Activated naive CD4-positive, alpha-beta T cell treated with anti-CD3 and anti-CD28 coated beads for 36 hours (primary cell): ENCODE measurements at regions of chr3 and their contacts with region 1.

Region 1: GRCh38 chr3:184417619-184418327 is 37.9 kb downstream of the CHRD start:
- DNase-seq: peak; percentile 78
- H3K4me3 Mint-ChIP-seq: no peak overlapping the region
- H3K27ac Mint-ChIP-seq: no peak overlapping the region
- H3K4me1 Mint-ChIP-seq: no peaks in the 10 kb centered on the region
- H3K27me3 Mint-ChIP-seq: no peaks in the 10 kb centered on the region

Region 2: DNA sequence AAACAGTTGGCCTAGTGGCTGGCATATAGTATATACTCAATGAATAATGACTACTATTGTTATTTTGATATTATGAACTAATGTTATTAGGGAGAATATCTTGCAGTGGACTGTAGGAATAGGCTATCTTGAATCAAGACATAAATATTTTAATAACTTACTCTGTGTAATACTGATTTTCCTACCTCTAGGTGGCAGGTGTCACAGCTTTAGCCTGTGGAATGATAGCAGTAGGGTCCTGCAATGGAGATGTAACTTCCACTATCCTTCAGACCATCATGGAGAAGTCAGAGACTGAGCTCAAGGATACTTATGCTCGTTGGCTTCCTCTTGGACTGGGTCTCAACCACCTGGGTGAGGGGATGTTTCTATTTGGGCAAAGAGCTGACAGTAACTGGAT is 112.2 kb before region 1 on chr3:
- CTCF ChIA-PET with region 1: no interaction called
- intact Hi-C with region 1: no loop called
- DNase-seq: no peak
- H3K4me3 Mint-ChIP-seq: no peak overlapping the region
- H3K27ac Mint-ChIP-seq: no peak overlapping the region
- H3K4me1 Mint-ChIP-seq: peaks cover 11% of the 10 kb centered on the region
- H3K27me3 Mint-ChIP-seq: no peaks in the 10 kb centered on the region

Region 3: GRCh38 chr3:184395320-184395660 is 22.5 kb before region 1 on chr3:
- CTCF ChIA-PET with region 1: no interaction called
- intact Hi-C with region 1: no loop called
- DNase-seq: no peak
- H3K4me3 Mint-ChIP-seq: no peak overlapping the region
- H3K27ac Mint-ChIP-seq: no peak overlapping the region
- H3K4me1 Mint-ChIP-seq: no peaks in the 10 kb centered on the region
- H3K27me3 Mint-ChIP-seq: peaks cover 7% of the 10 kb centered on the region

Region 4: GRCh38 chr3:184469423-184469822 is 51.6 kb after region 1 on chr3:
- CTCF ChIA-PET with region 1: interaction called, 3 read pairs
- intact Hi-C with region 1: loop called (anchors 1 kb)
- DNase-seq: peak; percentile 68
- H3K4me3 Mint-ChIP-seq: no peak overlapping the region
- H3K27ac Mint-ChIP-seq: no peak overlapping the region
- H3K4me1 Mint-ChIP-seq: peaks cover 20% of the 10 kb centered on the region
- H3K27me3 Mint-ChIP-seq: peaks cover 11% of the 10 kb centered on the region